Left ventricle myocardium superior (tissue), 1 donor: ENCODE measurements at regions of chr2 and their contacts with region 1.

Region 1: DNA sequence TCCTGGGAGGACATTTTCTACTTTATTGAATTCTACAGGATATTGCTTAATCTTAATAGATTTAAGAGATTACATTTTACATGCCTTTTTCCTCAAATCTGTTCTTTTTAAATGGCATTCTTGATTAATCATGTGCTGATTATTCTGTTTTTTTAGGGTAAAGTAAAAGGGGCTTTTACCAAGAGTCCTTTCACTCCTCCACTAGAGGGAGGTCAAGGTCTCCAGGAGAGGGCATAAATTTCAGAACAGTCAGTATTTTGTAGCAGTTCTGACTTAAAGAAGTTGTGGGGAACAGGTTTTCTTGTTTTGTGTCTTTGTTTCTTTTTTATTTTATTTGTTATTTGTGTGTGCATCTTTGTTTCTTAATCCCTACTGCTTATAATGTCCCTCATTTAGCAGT is 25.4 kb downstream of the WDR75 start:
- DNase-seq: no peak
- ATAC-seq: peak; percentile 69

Region 2: DNA sequence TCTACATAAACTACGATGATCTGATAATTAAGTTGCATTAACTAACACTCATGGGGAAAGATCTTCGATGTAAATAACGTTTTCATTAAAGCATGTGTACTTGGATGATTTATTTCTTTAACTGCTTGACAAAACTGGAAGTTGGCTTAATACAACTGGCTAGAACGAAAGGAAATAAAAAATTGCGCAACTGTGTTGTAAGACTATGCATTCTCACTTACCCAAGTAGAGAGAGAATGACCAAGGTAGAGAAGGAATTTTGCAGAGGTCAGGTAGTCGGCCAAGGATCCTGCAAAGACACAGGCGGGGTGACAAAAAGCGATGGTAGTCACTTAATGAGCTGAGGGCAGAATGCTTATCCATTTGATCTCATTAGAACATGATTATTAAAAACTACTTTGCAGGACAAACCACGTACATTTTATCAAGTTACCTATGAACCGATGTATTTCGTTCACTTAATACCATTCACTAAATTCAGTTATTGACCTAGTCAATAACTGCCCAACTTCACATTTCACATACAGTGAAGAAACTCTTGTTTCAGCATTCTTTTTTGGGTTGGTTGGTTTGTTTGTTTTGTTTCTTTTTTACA is 113.0 kb after region 1 on chr2:
- intact Hi-C with region 1: loop called (anchors 10 kb)
- DNase-seq: no peak
- ATAC-seq: peak; percentile 28

Region 3: GRCh38 chr2:189633392-189633811 is 166.7 kb after region 1 on chr2:
- intact Hi-C with region 1: loop called (anchors 10 kb)
- DNase-seq: no peak
- ATAC-seq: peak; percentile 24